ENCODE measurements at regions of chr14 and their contacts with region 1.

Region 1: GRCh38 chr14:23320774-23321571 is at the start of gene PABPN1:
- DNase-seq: peak; percentile 98
- ATAC-seq: peak; percentile 91
- H3K4me3 Mint-ChIP-seq: peak within 1 kb of the TSS; percentile 93
- H3K27ac Mint-ChIP-seq: peak within 1 kb of the TSS; percentile 95
- H3K4me1 Mint-ChIP-seq: peaks cover 25% of the 10 kb centered on the region
- H3K27me3 Mint-ChIP-seq: no peaks in the 10 kb centered on the region
- total RNA-seq, gene PABPN1: 237 to 338 TPM

Region 2: DNA sequence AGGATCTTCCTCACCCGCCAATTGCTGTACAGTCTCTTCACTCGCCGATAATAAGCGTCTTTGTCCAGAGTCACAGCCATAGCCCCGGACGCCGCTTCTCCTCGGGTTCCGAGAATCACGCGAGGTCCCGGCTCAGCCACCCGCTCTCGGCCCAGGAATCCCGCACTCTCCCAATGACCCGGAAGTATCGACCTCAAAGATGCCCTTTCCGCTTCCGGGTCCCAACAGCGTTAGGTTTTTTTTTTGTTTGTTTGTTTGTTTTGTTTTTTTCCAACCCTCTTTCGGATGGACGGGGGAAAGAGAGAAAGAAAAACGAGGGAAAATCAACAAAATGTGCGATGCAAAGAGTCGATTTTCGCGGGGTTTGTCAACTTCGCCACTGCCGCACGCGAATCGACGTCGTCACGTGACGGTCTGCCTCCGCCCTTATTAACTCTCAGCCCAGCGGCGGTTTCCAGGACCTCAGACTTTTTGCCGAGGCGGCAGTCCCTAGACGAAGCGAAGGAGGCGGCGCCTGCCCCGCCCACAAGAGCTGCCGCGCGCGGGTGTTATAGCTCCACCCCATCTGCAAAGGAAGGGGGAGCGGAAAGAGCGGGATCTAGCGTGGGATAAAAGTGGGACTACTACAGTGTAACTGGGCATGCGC is 1937.0 kb before region 1 on chr14 and contains the start of gene SUPT16H:
- CTCF ChIA-PET with region 1: no interaction called
- POLR2A ChIA-PET with region 1: no interaction called
- intact Hi-C with region 1: loop called in 1 of 2 experiments (anchors 1 kb)
- DNase-seq: peak; percentile 97
- ATAC-seq: peak; percentile 90
- H3K4me3 Mint-ChIP-seq: peak within 1 kb of the TSS; percentile 98
- H3K27ac Mint-ChIP-seq: peak within 1 kb of the TSS; percentile 98
- H3K4me1 Mint-ChIP-seq: peaks cover 36% of the 10 kb centered on the region
- H3K27me3 Mint-ChIP-seq: no peaks in the 10 kb centered on the region
- total RNA-seq, gene SUPT16H: 177 to 179 TPM

Region 3: GRCh38 chr14:23006544-23007419 is 314.2 kb before region 1 on chr14:
- CTCF ChIA-PET with region 1: no interaction called
- POLR2A ChIA-PET with region 1: interaction called, 4 read pairs
- intact Hi-C with region 1: loop called in 1 of 2 experiments (anchors 1 kb)
- DNase-seq: peak; percentile 98
- ATAC-seq: peak; percentile 98
- H3K4me3 Mint-ChIP-seq: peak overlapping the region; percentile 95
- H3K27ac Mint-ChIP-seq: peak overlapping the region; percentile 99
- H3K4me1 Mint-ChIP-seq: peaks cover 45% of the 10 kb centered on the region
- H3K27me3 Mint-ChIP-seq: no peaks in the 10 kb centered on the region

Region 4: GRCh38 chr14:23259426-23259825 is 61.5 kb before region 1 on chr14:
- CTCF ChIA-PET with region 1: no interaction called
- POLR2A ChIA-PET with region 1: no interaction called
- intact Hi-C with region 1: loop called in 1 of 2 experiments (anchors 2 kb)
- DNase-seq: no peak
- ATAC-seq: no peak
- H3K4me3 Mint-ChIP-seq: no peak overlapping the region
- H3K27ac Mint-ChIP-seq: no peak overlapping the region
- H3K4me1 Mint-ChIP-seq: no peaks in the 10 kb centered on the region
- H3K27me3 Mint-ChIP-seq: peaks cover 23% of the 10 kb centered on the region

Region 5: GRCh38 chr14:23469127-23469905 is 148.3 kb after region 1 on chr14 and contains the start of gene NGDN:
- CTCF ChIA-PET with region 1: interaction called, 4 read pairs
- POLR2A ChIA-PET with region 1: interaction called, 4 read pairs
- intact Hi-C with region 1: loop called (anchors 1 kb)
- DNase-seq: peak; percentile 95
- ATAC-seq: peak; percentile 97
- H3K4me3 Mint-ChIP-seq: no peak within 1 kb of the TSS
- H3K27ac Mint-ChIP-seq: no peak within 1 kb of the TSS
- H3K4me1 Mint-ChIP-seq: peaks cover 11% of the 10 kb centered on the region
- H3K27me3 Mint-ChIP-seq: no peaks in the 10 kb centered on the region
- total RNA-seq, gene NGDN: 53.0 to 57.8 TPM

Region 6: GRCh38 chr14:24442273-24443052 is 1121.5 kb after region 1 on chr14 and contains the start of gene SDR39U1:
- CTCF ChIA-PET with region 1: no interaction called
- POLR2A ChIA-PET with region 1: no interaction called
- intact Hi-C with region 1: loop called in 1 of 2 experiments (anchors 5 kb)
- DNase-seq: peak; percentile 98
- ATAC-seq: peak; percentile 92
- H3K4me3 Mint-ChIP-seq: peak within 1 kb of the TSS; percentile 97
- H3K27ac Mint-ChIP-seq: peak within 1 kb of the TSS; percentile 99
- H3K4me1 Mint-ChIP-seq: peaks cover 41% of the 10 kb centered on the region
- H3K27me3 Mint-ChIP-seq: no peaks in the 10 kb centered on the region
- total RNA-seq, gene SDR39U1: 40.9 to 47.8 TPM